T-cell (primary cell): ENCODE measurements at regions of chr19 and their contacts with region 1.

Region 1: GRCh38 chr19:11380653-11381534 is 3.2 kb downstream of the EPOR start:
- DNase-seq: peak; percentile 94 to 99 (median 98)
- ATAC-seq: peak; percentile 86 to 91 (median 90)
- H3K4me3 ChIP-seq: peak overlapping the region; percentile 49 to 62
- H3K4me3 Mint-ChIP-seq: peak overlapping the region; percentile 86 to 92 (median 90)
- H3K27ac ChIP-seq: peak overlapping the region; percentile 91
- H3K27ac Mint-ChIP-seq: peak overlapping the region; percentile 98
- H3K4me1 ChIP-seq: peaks cover 7 to 65% of the 10 kb centered on the region in 2 experiments
- H3K4me1 Mint-ChIP-seq: peaks cover 45 to 56% (median 51%) of the 10 kb centered on the region in 3 donors
- H3K27me3 ChIP-seq: peaks cover 0 to 35% of the 10 kb centered on the region in 2 experiments
- H3K27me3 Mint-ChIP-seq: peaks cover 0 to 17% of the 10 kb centered on the region in 2 donors

Region 2: DNA sequence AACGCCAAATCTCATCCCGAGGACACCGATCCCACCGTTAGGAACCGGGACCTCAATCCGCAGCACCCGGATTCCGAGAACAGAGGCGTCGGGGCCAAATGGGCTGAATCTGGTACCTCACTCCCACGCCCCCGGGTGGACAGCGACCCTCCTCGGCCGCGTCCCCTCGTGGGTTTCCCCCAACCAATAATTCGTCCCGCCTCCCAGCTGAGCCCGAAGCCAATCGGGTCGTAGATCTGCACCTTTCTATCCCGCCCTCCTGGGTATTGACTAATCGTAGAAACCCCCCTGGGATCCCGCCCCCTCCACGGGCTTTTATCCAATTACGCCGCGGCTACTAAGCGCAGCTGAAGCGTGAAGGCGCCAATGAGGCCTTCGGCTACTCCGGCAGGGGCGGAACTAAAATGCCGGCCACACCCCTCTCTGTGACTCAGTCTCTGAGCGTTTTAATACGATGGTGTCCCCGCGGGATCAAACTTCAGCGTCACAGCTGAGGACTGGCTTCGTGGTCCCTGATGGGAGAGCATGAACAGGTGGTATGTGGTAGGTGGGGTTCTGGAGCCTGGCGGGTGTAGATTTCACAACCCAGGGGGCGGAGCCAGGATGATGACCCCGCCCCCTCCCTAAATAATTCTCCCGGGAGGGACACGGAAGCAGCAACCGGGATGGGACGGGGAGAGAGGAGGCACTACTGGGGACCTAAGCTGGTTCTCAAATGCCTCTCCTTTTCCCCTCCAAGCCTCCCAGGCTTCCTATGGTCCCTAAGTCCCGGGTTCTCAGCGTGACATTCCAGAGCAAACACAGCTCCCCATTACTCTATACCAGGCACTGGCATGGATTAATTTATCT is 34.6 kb before region 1 on chr19 and contains the starts of genes CCDC159 and TMEM205:
- CTCF ChIA-PET with region 1: interaction called in 1 of 2 experiments, 18 read pairs
- POLR2A ChIA-PET with region 1: interaction called, 3 to 9 read pairs
- DNase-seq: peak; percentile 89 to 100 (median 99)
- ATAC-seq: peak; percentile 95 to 100 (median 99)
- H3K4me3 ChIP-seq: peak within 1 kb of the TSS; percentile 84 to 91
- H3K4me3 Mint-ChIP-seq: peak within 1 kb of the TSS; percentile 93 to 97 (median 97)
- H3K27ac ChIP-seq: peak within 1 kb of the TSS; percentile 82
- H3K27ac Mint-ChIP-seq: peak within 1 kb of the TSS; percentile 89 to 95
- H3K4me1 ChIP-seq: peaks cover 4 to 27% of the 10 kb centered on the region in 2 experiments
- H3K4me1 Mint-ChIP-seq: peaks cover 27 to 33% (median 28%) of the 10 kb centered on the region in 3 donors
- H3K27me3 ChIP-seq: peaks cover 0 to 3% of the 10 kb centered on the region in 2 experiments
- H3K27me3 Mint-ChIP-seq: no peaks in the 10 kb centered on the region
- total RNA-seq, gene CCDC159: 59.7 to 81.8 (median 69.6) TPM
- total RNA-seq, gene TMEM205: 15.6 to 32.9 (median 27.0) TPM

Region 3: DNA sequence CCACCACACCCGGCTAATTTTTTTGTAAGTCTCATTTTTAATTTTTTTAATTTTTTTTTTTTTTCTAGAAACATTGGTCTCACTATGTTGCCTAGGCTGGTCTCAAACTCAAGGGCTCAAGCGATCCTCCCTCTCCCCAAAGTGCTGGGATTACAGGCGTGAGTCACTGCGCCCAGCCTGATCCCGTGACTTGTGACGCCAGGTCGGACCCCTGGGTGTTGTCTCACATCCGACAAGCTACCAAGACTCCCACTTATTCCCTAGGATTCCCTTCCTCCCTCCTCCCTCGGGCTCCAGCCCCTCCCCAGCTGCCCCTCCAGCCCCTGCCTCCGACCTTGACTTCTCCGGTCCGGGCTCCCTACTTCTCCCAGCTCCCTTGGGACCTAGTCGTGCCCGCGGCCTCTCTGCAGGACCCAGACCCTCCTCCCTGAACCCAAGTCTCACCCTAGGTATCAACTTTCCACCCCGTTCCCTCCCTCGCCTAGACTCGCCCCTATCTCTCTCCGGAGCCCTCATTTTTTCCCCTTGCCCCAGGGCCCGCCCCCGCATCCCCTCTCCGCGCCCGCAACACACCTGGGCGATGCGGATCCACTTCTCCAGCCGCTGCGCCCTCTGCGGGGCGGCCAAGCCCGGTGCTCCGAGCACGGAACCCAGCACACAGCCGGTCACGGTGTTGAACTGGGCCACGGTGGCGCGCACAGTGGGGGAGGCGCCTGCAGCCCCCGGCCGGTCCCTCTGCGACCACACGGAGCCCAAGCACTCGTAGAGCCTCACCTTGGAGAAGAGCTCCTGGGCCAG is 25.2 kb after region 1 on chr19:
- CTCF ChIA-PET with region 1: interaction called, 5 to 14 read pairs
- POLR2A ChIA-PET with region 1: no interaction called
- DNase-seq: peak in 9 of 35 experiments; percentile 10 to 50 (median 34)
- ATAC-seq: peak; percentile 50 to 76 (median 54)
- H3K4me3 ChIP-seq: no peak overlapping the region
- H3K4me3 Mint-ChIP-seq: no peak overlapping the region
- H3K27ac ChIP-seq: no peak overlapping the region
- H3K27ac Mint-ChIP-seq: no peak overlapping the region
- H3K4me1 ChIP-seq: peaks cover 0 to 7% of the 10 kb centered on the region in 2 experiments
- H3K4me1 Mint-ChIP-seq: no peaks in the 10 kb centered on the region
- H3K27me3 ChIP-seq: peaks cover 4 to 47% of the 10 kb centered on the region in 2 experiments
- H3K27me3 Mint-ChIP-seq: peaks cover 9 to 21% of the 10 kb centered on the region in 2 donors

Region 4: GRCh38 chr19:11482384-11483050 is 101.6 kb after region 1 on chr19:
- CTCF ChIA-PET with region 1: interaction called, 6 to 26 read pairs
- POLR2A ChIA-PET with region 1: no interaction called
- DNase-seq: peak; percentile 52 to 95 (median 79)
- ATAC-seq: peak; percentile 82 to 86 (median 84)
- H3K4me3 ChIP-seq: peak overlapping the region; percentile 14 to 49
- H3K4me3 Mint-ChIP-seq: peak overlapping the region; percentile 31 to 71 (median 70)
- H3K27ac ChIP-seq: no peak overlapping the region
- H3K27ac Mint-ChIP-seq: no peak overlapping the region
- H3K4me1 ChIP-seq: peaks cover 6 to 33% of the 10 kb centered on the region in 2 experiments
- H3K4me1 Mint-ChIP-seq: peaks cover 19 to 30% (median 29%) of the 10 kb centered on the region in 3 donors
- H3K27me3 ChIP-seq: peaks cover 5 to 48% of the 10 kb centered on the region in 2 experiments
- H3K27me3 Mint-ChIP-seq: peaks cover 20 to 35% of the 10 kb centered on the region in 2 donors